Activated naive CD4-positive, alpha-beta T cell treated with anti-CD3 and anti-CD28 coated beads for 36 hours (primary cell): ENCODE measurements at regions of chr14 and their contacts with region 1.

Region 1: DNA sequence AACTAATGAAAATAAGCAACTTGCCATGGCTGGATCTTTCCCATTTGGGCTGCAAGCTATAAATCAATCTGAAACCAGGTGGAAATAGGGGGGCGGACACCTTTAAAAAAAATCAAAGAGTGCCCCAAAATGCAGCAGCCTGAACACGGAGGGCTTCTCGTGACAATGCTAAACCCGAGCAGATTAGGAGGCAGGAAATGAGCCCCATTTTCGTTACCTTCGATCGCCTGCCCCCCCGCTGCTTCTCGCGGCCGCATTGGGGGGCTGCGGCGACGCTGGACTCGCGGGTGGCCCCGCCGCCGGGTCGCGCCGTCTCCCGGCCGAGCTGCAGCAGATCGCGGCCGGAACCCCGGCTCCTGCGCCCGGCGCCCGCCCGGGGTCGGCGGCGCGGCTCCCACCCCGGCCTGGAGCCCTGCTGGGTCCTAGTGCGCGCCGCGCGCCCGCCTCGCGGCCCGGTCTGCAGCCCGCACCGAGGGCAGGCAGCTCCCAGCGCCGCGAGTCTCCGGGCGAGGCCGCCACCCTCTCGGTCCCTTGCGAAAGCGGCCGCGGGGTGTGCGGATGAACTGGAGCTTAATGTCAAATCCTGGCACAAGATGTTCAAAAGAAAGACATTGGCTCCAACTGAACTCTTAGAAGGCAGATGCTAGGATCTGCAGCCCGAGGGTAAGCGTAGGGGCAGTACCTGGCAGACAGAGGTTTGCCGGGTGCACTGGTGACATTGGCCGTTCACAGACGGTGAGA is 201.9 kb upstream of the FOXN3 start:
- DNase-seq: peak; percentile 60
- H3K4me3 Mint-ChIP-seq: peak overlapping the region; percentile 86
- H3K27ac Mint-ChIP-seq: peak overlapping the region; percentile 98
- H3K4me1 Mint-ChIP-seq: peaks cover 64% of the 10 kb centered on the region
- H3K27me3 Mint-ChIP-seq: no peaks in the 10 kb centered on the region

Region 2: GRCh38 chr14:89040460-89041259 is 578.3 kb before region 1 on chr14:
- CTCF ChIA-PET with region 1: interaction called, 3 read pairs
- intact Hi-C with region 1: loop called (anchors 2 kb)
- DNase-seq: peak; percentile 91
- H3K4me3 Mint-ChIP-seq: peak overlapping the region; percentile 70
- H3K27ac Mint-ChIP-seq: no peak overlapping the region
- H3K4me1 Mint-ChIP-seq: peaks cover 12% of the 10 kb centered on the region
- H3K27me3 Mint-ChIP-seq: peaks cover 8% of the 10 kb centered on the region

Region 3: DNA sequence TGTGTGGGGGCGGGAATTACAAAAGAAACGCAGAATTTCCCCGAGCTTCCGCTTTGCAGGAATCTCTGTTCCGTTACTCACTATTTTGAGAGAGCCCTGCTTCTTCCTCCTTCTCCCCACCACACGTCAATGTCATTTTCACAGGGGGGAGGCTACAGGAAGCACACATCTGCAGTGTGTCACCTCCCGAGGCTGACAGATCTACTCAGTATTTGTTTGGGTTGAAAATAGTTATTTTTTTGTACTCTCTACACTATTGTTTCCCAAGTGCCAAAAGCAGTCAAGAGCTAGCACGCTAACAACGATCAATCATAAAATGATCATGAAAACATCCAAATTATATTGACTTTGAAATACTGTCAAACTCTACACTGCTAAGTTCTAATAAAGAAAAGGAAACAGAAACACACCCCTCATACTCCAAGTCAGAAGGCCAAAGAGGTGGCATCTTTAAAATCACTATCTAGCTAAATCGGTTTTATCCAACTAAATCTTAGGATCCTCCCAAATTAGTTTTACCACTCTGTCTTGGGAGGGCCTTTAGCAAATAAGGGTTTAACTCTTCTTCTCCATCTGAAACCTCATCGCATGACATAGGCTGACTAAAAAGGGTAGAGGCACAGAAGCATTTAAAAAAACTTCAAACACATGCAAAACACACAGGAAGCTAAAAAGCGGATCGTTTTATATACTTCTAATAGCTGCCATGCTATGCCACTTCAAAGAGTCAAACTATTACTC is 253.8 kb before region 1 on chr14:
- CTCF ChIA-PET with region 1: interaction called, 3 read pairs
- intact Hi-C with region 1: loop called (anchors 1 kb)
- DNase-seq: peak; percentile 80
- H3K4me3 Mint-ChIP-seq: peak overlapping the region; percentile 73
- H3K27ac Mint-ChIP-seq: peak overlapping the region; percentile 97
- H3K4me1 Mint-ChIP-seq: peaks cover 66% of the 10 kb centered on the region
- H3K27me3 Mint-ChIP-seq: no peaks in the 10 kb centered on the region

Region 4: DNA sequence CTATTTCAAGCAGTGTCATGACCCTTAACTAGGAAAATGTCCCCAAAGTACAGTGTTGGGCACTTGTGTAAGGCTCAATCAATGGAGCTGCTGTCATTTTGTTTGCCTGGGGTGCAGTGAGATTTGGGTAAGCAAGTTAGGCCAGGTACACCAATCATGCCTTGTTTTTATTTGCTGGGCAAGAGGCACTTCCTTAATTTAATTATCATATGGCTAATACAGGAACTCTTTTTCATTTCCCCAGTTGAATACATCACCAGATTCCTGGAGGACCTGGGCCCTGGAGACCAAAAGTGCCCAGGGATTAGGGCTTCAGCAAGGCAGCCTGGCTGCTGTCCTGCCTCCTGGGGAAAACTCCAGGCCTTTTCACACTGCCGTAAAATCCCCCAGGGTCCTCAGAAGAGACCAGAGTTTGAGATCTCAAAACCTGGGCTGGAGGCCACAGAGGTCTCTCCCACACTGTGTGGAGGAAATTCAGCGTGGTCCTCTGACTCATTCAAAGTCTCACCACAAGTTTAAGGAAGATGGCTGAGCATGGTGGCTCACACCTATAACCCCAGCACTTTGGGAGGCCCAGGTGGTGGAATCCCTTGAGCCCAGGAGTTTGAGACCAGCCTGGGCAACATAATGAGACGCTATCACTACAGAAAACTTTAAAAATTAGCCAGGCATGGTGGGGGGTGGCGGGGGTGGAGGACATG is 173.6 kb before region 1 on chr14:
- CTCF ChIA-PET with region 1: no interaction called
- intact Hi-C with region 1: loop called (anchors 1 kb)
- DNase-seq: peak; percentile 65
- H3K4me3 Mint-ChIP-seq: no peak overlapping the region
- H3K27ac Mint-ChIP-seq: peak overlapping the region; percentile 79
- H3K4me1 Mint-ChIP-seq: peaks cover 60% of the 10 kb centered on the region
- H3K27me3 Mint-ChIP-seq: no peaks in the 10 kb centered on the region

Region 5: GRCh38 chr14:89681086-89682018 is 62.4 kb after region 1 on chr14:
- CTCF ChIA-PET with region 1: interaction called, 3 read pairs
- intact Hi-C with region 1: loop called (anchors 1 kb)
- DNase-seq: peak; percentile 80
- H3K4me3 Mint-ChIP-seq: peak overlapping the region; percentile 44
- H3K27ac Mint-ChIP-seq: peak overlapping the region; percentile 81
- H3K4me1 Mint-ChIP-seq: peaks cover 38% of the 10 kb centered on the region
- H3K27me3 Mint-ChIP-seq: no peaks in the 10 kb centered on the region

Region 6: DNA sequence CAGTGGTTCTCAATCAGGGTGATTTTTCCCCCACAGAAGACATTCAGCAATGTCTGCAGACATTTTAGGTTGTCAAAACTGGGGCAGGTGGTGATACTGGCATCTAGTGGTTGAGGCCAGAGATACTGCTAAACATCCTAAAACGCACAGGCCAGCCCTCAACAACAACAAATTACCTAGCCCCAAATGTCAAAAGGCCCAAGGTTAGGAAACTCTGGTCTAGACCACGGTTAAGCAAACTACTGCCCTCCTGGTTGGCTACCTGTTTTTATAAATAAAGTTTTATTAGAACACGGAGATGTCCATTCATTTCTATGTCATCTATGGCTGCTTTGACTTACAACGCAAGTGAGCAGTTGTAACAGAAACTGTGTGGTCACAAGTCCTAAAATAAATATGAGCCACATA is 148.9 kb after region 1 on chr14:
- CTCF ChIA-PET with region 1: no interaction called
- intact Hi-C with region 1: loop called (anchors 1 kb)
- DNase-seq: peak; percentile 86
- H3K4me3 Mint-ChIP-seq: peak overlapping the region; percentile 26
- H3K27ac Mint-ChIP-seq: peak overlapping the region; percentile 74
- H3K4me1 Mint-ChIP-seq: peaks cover 31% of the 10 kb centered on the region
- H3K27me3 Mint-ChIP-seq: no peaks in the 10 kb centered on the region